ENCODE measurements at regions of chr7 and their contacts with region 1.

Region 1: DNA sequence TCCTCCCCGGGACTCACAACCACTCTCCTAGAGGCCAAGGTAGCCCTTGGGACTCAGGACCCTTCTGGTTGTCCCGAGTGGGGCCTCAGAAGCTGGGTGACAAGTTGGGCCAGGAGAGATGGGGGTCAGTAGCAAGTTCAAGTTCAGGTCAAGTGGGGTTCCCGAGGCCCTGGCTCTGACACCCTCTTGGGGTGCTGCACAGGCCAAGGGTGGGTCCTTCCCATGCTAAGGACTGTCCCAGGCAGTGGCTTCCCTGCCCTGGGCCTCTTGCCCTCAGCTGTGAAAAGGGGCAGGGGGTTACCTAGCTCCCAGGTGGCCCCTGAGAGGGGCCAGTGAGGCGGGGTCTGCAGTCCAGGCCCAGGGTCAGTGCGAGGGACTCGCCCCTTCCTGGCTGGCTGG is 115.4 kb upstream of the TNRC18 start:
- DNase-seq: no peak
- ATAC-seq: peak; percentile 16
- H3K4me3 Mint-ChIP-seq: peak overlapping the region; percentile 66
- H3K27ac Mint-ChIP-seq: peak overlapping the region; percentile 80
- H3K4me1 Mint-ChIP-seq: peaks cover 14% of the 10 kb centered on the region
- H3K27me3 Mint-ChIP-seq: peaks cover 3% of the 10 kb centered on the region

Region 2: DNA sequence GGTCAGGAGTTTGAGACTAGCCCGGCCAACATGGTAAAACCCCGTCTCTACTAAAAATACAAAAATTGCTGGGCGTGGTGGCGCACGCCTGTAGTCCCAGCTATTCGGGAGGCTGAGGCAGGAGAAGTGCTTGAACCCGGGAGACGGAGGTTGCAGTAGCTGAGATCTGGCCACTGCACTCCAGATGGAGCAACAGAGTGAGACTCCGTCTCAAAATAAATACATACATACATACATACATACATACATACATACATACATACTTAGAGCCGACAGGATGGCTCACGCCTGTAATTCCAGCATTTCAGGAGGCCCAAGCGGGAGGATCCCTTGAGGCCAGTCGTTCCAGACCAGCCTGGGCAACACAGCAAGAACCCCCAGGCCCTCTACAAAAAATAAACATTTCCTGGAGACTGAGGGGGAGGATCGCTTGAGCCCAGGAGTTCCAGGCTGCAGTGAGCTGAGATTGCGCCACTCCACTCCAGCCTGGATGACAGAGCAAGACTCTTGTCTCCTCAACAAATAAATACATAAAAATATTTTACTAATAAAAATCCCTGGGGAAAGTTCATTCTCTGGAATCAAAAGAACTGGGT is 24.5 kb before region 1 on chr7:
- POLR2A ChIA-PET with region 1: no interaction called
- DNase-seq: no peak
- ATAC-seq: no peak
- H3K4me3 Mint-ChIP-seq: peak overlapping the region; percentile 90
- H3K27ac Mint-ChIP-seq: peak overlapping the region; percentile 92
- H3K4me1 Mint-ChIP-seq: peaks cover 11% of the 10 kb centered on the region
- H3K27me3 Mint-ChIP-seq: no peaks in the 10 kb centered on the region

Region 3: GRCh38 chr7:5526100-5526905 is 12.7 kb before region 1 on chr7:
- POLR2A ChIA-PET with region 1: interaction called, 15 read pairs
- DNase-seq: peak; percentile 55
- ATAC-seq: no peak
- H3K4me3 Mint-ChIP-seq: peak overlapping the region; percentile 92
- H3K27ac Mint-ChIP-seq: peak overlapping the region; percentile 92
- H3K4me1 Mint-ChIP-seq: peaks cover 36% of the 10 kb centered on the region
- H3K27me3 Mint-ChIP-seq: no peaks in the 10 kb centered on the region

Region 4: GRCh38 chr7:5557920-5558401 is 18.9 kb after region 1 on chr7:
- POLR2A ChIA-PET with region 1: interaction called, 10 read pairs
- DNase-seq: peak; percentile 60
- ATAC-seq: peak; percentile 3
- H3K4me3 Mint-ChIP-seq: peak overlapping the region; percentile 82
- H3K27ac Mint-ChIP-seq: peak overlapping the region; percentile 89
- H3K4me1 Mint-ChIP-seq: peaks cover 40% of the 10 kb centered on the region
- H3K27me3 Mint-ChIP-seq: peaks cover 7% of the 10 kb centered on the region

Measured in activated naive CD8-positive, alpha-beta T cell treated with anti-CD3 and anti-CD28 coated beads, Interleukin-2, amount 10 ng/mL, durations not matched to agents 7 days and 5 days (primary cell).